B cell (primary cell): ENCODE measurements at regions of chrX and their contacts with region 1.

Region 1: GRCh38 chrX:13254076-13254785 is 65.6 kb downstream of the ATXN3L start:
- DNase-seq: peak; percentile 23
- ATAC-seq: no peak
- H3K4me3 ChIP-seq: no peak overlapping the region
- H3K4me3 Mint-ChIP-seq: peak overlapping the region; percentile 40
- H3K27ac ChIP-seq: peak overlapping the region; percentile 16 to 38
- H3K27ac Mint-ChIP-seq: peak overlapping the region; percentile 54
- H3K4me1 ChIP-seq: peaks cover 54 to 66% of the 10 kb centered on the region in 2 donors
- H3K4me1 Mint-ChIP-seq: peaks cover 64% of the 10 kb centered on the region
- H3K27me3 ChIP-seq: no peaks in the 10 kb centered on the region
- H3K27me3 Mint-ChIP-seq: no peaks in the 10 kb centered on the region
- CTCF ChIP-seq: no peak

Region 2: GRCh38 chrX:13208281-13208935 is 45.8 kb before region 1 on chrX:
- CTCF ChIA-PET with region 1: no interaction called
- POLR2A ChIA-PET with region 1: no interaction called
- intact Hi-C with region 1: no loop called
- DNase-seq: no peak
- ATAC-seq: no peak
- H3K4me3 ChIP-seq: no peak overlapping the region
- H3K4me3 Mint-ChIP-seq: no peak overlapping the region
- H3K27ac ChIP-seq: no peak overlapping the region
- H3K27ac Mint-ChIP-seq: no peak overlapping the region
- H3K4me1 ChIP-seq: no peaks in the 10 kb centered on the region
- H3K4me1 Mint-ChIP-seq: no peaks in the 10 kb centered on the region
- H3K27me3 ChIP-seq: no peaks in the 10 kb centered on the region
- H3K27me3 Mint-ChIP-seq: no peaks in the 10 kb centered on the region
- CTCF ChIP-seq: no peak

Region 3: GRCh38 chrX:13283950-13284914 is 30.0 kb after region 1 on chrX:
- CTCF ChIA-PET with region 1: interaction called, 4 read pairs
- POLR2A ChIA-PET with region 1: no interaction called
- intact Hi-C with region 1: loop called (anchors 5 kb)
- DNase-seq: no peak
- ATAC-seq: no peak
- H3K4me3 ChIP-seq: no peak overlapping the region
- H3K4me3 Mint-ChIP-seq: no peak overlapping the region
- H3K27ac ChIP-seq: peak overlapping the region; percentile 29 to 60
- H3K27ac Mint-ChIP-seq: peak overlapping the region; percentile 88
- H3K4me1 ChIP-seq: peaks cover 11 to 13% of the 10 kb centered on the region in 2 donors
- H3K4me1 Mint-ChIP-seq: peaks cover 10% of the 10 kb centered on the region
- H3K27me3 ChIP-seq: no peaks in the 10 kb centered on the region
- H3K27me3 Mint-ChIP-seq: no peaks in the 10 kb centered on the region
- CTCF ChIP-seq: no peak

Region 4: GRCh38 chrX:13341491-13342101 is 87.4 kb after region 1 on chrX:
- CTCF ChIA-PET with region 1: no interaction called
- POLR2A ChIA-PET with region 1: interaction called, 3 read pairs
- intact Hi-C with region 1: loop called (anchors 10 kb)
- DNase-seq: no peak
- ATAC-seq: no peak
- H3K4me3 ChIP-seq: no peak overlapping the region
- H3K4me3 Mint-ChIP-seq: no peak overlapping the region
- H3K27ac ChIP-seq: no peak overlapping the region
- H3K27ac Mint-ChIP-seq: no peak overlapping the region
- H3K4me1 ChIP-seq: peaks cover 15 to 23% of the 10 kb centered on the region in 2 donors
- H3K4me1 Mint-ChIP-seq: peaks cover 19% of the 10 kb centered on the region
- H3K27me3 ChIP-seq: no peaks in the 10 kb centered on the region
- H3K27me3 Mint-ChIP-seq: no peaks in the 10 kb centered on the region
- CTCF ChIP-seq: no peak